ENCODE measurements at regions of chr16 and their contacts with region 1.

Region 1: GRCh38 chr16:67928561-67929364 is 2.9 kb downstream of the CTRL start:
- DNase-seq: peak; percentile 83
- ATAC-seq: peak; percentile 68

Region 2: GRCh38 chr16:67091906-67092566 is 836.7 kb before region 1 on chr16:
- intact Hi-C with region 1: no loop called
- DNase-seq: no peak
- ATAC-seq: no peak

Region 3: DNA sequence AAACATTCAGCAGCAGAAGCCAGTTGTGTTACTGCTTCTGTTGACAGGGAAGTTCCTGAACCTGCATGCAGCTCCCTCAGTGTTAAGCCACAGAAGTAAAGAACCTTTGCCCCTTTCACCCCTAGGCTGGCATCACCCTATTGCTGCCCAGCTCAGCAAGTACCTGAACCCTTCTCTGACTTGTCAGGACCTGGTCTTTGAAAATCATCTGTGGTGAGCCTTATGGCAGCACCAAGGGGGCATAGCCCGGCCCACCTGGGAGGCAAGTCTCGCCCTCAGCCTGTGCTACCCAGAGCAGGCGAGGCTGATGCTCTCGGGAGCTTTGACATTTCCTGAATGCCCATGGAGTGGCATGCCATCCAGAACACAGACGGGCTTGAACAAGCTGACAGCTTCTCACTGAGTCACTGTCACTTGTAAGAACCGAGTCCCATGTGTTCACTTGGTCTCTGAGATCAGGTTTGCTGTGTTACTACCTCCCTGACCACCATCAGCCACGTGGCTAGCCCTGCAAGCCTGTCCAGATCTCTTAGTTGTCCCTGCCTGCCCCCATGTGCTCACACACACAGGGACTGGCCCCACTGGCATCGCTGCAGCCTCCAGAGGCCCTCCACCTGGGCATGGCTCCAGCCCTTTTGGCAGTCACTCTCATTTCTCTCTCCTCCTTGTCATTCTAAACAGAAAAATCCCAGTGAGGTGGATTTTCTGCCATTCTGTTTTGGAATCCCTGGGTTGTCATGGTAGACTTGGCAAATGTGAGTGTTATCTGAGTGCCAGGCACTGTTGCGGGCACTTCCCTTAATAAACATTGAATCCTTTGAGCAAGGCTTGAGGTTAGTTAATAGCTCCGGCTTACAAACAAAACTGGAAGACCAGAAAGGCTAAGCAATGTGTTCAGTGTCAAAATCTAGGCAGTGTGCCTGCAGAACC is 286.7 kb before region 1 on chr16:
- intact Hi-C with region 1: no loop called
- DNase-seq: peak; percentile 85
- ATAC-seq: peak; percentile 93

Region 4: GRCh38 chr16:67816240-67817031 is 112.3 kb before region 1 on chr16:
- intact Hi-C with region 1: loop called (anchors 5 kb)
- DNase-seq: peak; percentile 90
- ATAC-seq: peak; percentile 97

Region 5: GRCh38 chr16:67841764-67842508 is 86.8 kb before region 1 on chr16 and contains the start of gene THAP11:
- intact Hi-C with region 1: no loop called
- DNase-seq: peak; percentile 95
- ATAC-seq: peak; percentile 73
- total RNA-seq, gene THAP11: 32.6 TPM